ENCODE measurements at regions of chr10 and their contacts with region 1.

Region 1: GRCh38 chr10:68752711-68753350 is 31.8 kb downstream of the CCAR1 start:
- DNase-seq: no peak
- ATAC-seq: no peak
- H3K4me3 ChIP-seq: no peak overlapping the region
- H3K27ac ChIP-seq: no peak overlapping the region
- H3K4me1 ChIP-seq: no peaks in the 10 kb centered on the region
- H3K27me3 ChIP-seq: no peaks in the 10 kb centered on the region
- CTCF ChIP-seq: no peak

Region 2: GRCh38 chr10:68784476-68784875 is 31.6 kb after region 1 on chr10:
- intact Hi-C with region 1: loop called in 1 of 2 experiments (anchors 5 kb)
- DNase-seq: no peak
- ATAC-seq: no peak
- H3K4me3 ChIP-seq: no peak overlapping the region
- H3K27ac ChIP-seq: no peak overlapping the region
- H3K4me1 ChIP-seq: no peaks in the 10 kb centered on the region
- H3K27me3 ChIP-seq: no peaks in the 10 kb centered on the region
- CTCF ChIP-seq: no peak

Region 3: GRCh38 chr10:68924593-68924992 is 171.8 kb after region 1 on chr10:
- intact Hi-C with region 1: no loop called
- DNase-seq: no peak
- ATAC-seq: no peak
- H3K4me3 ChIP-seq: no peak overlapping the region
- H3K27ac ChIP-seq: no peak overlapping the region
- H3K4me1 ChIP-seq: no peaks in the 10 kb centered on the region
- H3K27me3 ChIP-seq: no peaks in the 10 kb centered on the region
- CTCF ChIP-seq: no peak

Region 4: DNA sequence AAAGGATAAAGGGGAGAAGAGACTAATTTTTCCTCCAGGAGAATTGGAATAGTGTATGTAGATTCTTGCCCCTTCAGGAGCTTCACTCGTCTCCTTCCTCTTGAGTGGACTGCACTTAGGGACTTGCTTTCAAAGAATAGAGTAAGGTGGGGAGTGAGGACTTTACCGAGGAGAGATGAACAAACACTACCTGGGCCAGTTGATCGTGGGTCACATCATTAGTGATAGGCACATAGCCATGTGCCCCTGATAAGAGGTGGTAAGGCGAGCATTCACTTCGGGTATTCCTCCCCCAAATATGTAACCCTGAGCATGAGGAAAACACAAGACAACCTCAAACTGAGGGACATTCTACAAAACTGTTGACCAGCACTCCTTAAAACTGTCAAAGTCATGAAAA is 221.1 kb after region 1 on chr10:
- intact Hi-C with region 1: loop called (anchors 5 to 10 kb)
- DNase-seq: no peak
- ATAC-seq: no peak
- H3K4me3 ChIP-seq: no peak overlapping the region
- H3K27ac ChIP-seq: no peak overlapping the region
- H3K4me1 ChIP-seq: no peaks in the 10 kb centered on the region
- H3K27me3 ChIP-seq: no peaks in the 10 kb centered on the region
- CTCF ChIP-seq: no peak

Region 5: GRCh38 chr10:68981074-68981473 is 228.2 kb after region 1 on chr10:
- intact Hi-C with region 1: loop called (anchors 5 to 10 kb)
- DNase-seq: no peak
- ATAC-seq: no peak
- H3K4me3 ChIP-seq: no peak overlapping the region
- H3K27ac ChIP-seq: no peak overlapping the region
- H3K4me1 ChIP-seq: no peaks in the 10 kb centered on the region
- H3K27me3 ChIP-seq: no peaks in the 10 kb centered on the region
- CTCF ChIP-seq: no peak